Activated T-helper 1 cell treated with anti-CD3 and anti-CD28 coated beads, Interleukin-12 subunit alpha, Interleukin-12 subunit beta, Interleukin-2, Interleukin-4 antibody, amounts not matched to agents 30 ng/mL and 10 ng/mL and 1 ng/mL, durations not matched to agents 14 hours and 24 hours and 36 hours (primary cell): ENCODE measurements at regions of chr10 and their contacts with region 1.

Region 1: GRCh38 chr10:4131407-4132228 is 346.6 kb upstream of the KLF6 start:
- DNase-seq: peak; percentile 49
- H3K4me3 Mint-ChIP-seq: no peak overlapping the region
- H3K27ac Mint-ChIP-seq: no peak overlapping the region
- H3K4me1 Mint-ChIP-seq: peaks cover 26% of the 10 kb centered on the region
- H3K27me3 Mint-ChIP-seq: no peaks in the 10 kb centered on the region

Region 2: DNA sequence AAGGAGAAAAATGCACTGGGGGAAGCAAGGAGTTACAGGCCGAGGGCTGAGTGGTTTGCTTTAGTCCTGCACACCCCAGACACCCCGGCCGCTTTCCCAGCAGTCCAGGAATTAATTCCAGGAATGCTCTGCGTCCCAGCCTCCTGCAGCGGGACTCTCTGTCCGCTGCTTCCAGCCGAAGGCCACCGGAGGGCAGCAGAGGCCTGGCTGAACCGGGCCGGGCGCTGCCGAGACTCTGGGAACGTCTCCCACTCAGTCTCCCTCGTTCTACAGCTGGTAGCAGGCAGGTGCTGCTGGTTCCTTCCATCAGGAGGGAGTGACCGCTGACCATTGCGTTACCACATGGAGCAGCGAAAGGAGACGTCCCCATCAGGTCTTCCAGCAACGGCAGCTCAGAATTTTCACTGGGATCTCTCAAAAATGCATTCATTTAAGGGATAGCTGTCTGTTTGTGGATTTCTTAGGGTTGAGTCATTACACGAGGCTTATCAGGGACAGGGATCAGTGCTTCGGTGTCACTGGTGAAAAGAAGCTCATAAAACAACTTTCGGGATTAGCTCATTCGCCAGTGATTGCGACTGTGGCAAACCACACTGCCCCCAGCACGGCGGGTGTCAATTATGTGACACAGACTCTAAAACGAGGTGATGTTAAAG is 934.1 kb before region 1 on chr10:
- intact Hi-C with region 1: loop called (anchors 5 kb)
- DNase-seq: peak; percentile 76
- H3K4me3 Mint-ChIP-seq: peak overlapping the region; percentile 37
- H3K27ac Mint-ChIP-seq: peak overlapping the region; percentile 57
- H3K4me1 Mint-ChIP-seq: peaks cover 24% of the 10 kb centered on the region
- H3K27me3 Mint-ChIP-seq: peaks cover 82% of the 10 kb centered on the region

Region 3: DNA sequence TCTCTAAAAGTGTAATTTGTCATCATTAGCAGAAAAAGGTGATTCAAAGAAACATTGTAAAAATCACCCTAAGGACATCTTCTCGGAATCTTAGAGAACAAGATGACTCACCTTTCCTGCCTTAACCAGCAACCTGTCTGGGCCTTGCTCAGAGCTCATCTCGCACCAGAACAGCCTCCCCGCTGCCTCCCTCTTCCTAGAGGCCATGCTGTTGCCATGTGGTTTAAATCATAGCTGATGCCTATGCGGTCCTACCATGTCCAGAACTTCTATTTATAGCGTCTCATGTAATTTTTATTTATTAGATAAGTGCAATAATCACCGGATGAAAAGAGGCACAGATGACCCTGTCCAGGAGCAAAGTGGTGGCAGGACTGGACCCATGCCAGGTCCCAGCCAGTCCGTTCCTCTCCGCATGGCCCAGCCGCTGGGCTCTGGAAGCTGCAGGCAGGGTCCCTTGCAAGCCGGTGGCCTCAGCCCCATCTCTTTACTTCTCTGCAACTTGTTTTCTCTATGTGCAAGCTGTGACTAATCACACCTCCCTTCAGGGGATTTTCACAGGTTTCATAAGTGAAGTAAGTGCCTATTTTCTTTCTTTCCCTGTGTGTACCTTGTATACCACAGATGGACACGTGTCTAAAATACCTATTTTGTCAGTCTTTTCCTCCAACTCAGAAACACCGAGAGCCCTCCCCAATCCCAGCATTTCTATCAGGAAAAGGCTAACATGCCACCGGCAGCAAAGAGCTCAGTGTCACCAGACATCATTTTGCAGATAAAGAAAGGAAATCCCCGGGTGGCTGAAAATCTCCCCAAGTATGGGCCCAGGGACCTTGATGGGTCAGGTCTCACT is 373.8 kb before region 1 on chr10:
- intact Hi-C with region 1: loop called (anchors 1 kb)
- DNase-seq: peak; percentile 66
- H3K4me3 Mint-ChIP-seq: peak overlapping the region; percentile 78
- H3K27ac Mint-ChIP-seq: peak overlapping the region; percentile 100
- H3K4me1 Mint-ChIP-seq: peaks cover 84% of the 10 kb centered on the region
- H3K27me3 Mint-ChIP-seq: no peaks in the 10 kb centered on the region

Region 4: DNA sequence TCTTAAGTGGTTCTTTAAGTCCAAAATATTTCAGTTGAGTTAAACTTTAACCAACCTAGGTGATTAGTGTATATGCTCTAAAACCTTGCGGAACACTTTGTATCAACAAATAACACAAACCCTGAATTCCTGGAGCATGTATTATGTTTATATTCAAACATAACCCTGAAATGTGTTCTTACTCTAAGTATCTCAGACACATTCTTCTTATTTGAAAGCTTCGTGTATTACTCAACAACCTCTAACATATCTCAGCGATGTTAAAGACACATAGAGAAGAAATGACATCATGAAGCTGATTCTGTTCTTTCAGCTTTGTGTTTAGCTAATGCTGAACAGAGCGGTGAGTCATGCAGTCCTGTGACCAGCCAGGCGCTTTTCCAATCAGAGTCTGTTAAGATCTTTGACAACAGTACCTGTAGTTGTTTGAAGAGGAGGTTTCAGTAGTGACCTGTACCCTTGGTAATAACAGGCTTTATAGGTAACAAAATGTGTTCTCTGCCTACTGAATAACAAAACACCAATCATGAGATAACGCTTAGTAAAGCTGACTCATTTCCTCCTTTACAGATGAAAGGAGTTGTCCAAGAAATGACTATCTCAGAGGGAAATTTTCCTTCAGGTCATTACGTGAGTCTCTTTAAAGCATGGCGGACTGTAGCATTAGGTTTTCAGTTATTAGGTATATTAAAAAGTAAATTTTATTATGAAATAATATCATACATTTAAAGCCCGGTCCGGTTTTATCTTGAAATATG is 279.3 kb before region 1 on chr10:
- intact Hi-C with region 1: loop called (anchors 1 kb)
- DNase-seq: peak; percentile 58
- H3K4me3 Mint-ChIP-seq: peak overlapping the region; percentile 52
- H3K27ac Mint-ChIP-seq: peak overlapping the region; percentile 92
- H3K4me1 Mint-ChIP-seq: peaks cover 37% of the 10 kb centered on the region
- H3K27me3 Mint-ChIP-seq: no peaks in the 10 kb centered on the region

Region 5: DNA sequence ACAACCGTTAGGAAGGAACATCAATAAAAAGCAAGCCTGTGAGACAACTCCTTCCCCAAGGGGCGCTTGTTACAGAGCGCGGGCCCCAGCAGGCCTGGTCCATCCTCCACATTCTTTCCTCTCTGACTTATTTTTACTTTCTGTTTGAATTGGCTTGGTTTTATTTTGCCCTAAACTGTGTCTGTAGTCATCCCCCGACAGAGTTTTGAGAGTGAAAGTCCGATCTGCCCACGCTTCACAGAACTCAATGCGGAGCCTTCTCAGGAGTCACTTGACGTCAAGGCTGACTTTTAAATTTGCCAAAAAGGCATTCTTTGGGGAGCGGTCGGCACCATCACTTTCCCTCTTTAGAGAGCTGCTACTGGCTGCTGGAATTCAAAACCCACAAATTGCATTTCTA is 196.5 kb before region 1 on chr10:
- intact Hi-C with region 1: loop called (anchors 1 kb)
- DNase-seq: peak; percentile 75
- H3K4me3 Mint-ChIP-seq: peak overlapping the region; percentile 56
- H3K27ac Mint-ChIP-seq: peak overlapping the region; percentile 86
- H3K4me1 Mint-ChIP-seq: peaks cover 67% of the 10 kb centered on the region
- H3K27me3 Mint-ChIP-seq: peaks cover 3% of the 10 kb centered on the region

Region 6: GRCh38 chr10:4067531-4067930 is 64.1 kb before region 1 on chr10:
- intact Hi-C with region 1: loop called (anchors 2 kb)
- DNase-seq: no peak
- H3K4me3 Mint-ChIP-seq: no peak overlapping the region
- H3K27ac Mint-ChIP-seq: no peak overlapping the region
- H3K4me1 Mint-ChIP-seq: no peaks in the 10 kb centered on the region
- H3K27me3 Mint-ChIP-seq: no peaks in the 10 kb centered on the region

Region 7: GRCh38 chr10:4186849-4187540 is 55.4 kb after region 1 on chr10:
- intact Hi-C with region 1: no loop called
- DNase-seq: no peak
- H3K4me3 Mint-ChIP-seq: no peak overlapping the region
- H3K27ac Mint-ChIP-seq: no peak overlapping the region
- H3K4me1 Mint-ChIP-seq: peaks cover 25% of the 10 kb centered on the region
- H3K27me3 Mint-ChIP-seq: peaks cover 2% of the 10 kb centered on the region

Region 8: GRCh38 chr10:4249841-4250586 is 118.4 kb after region 1 on chr10:
- intact Hi-C with region 1: no loop called
- DNase-seq: no peak
- H3K4me3 Mint-ChIP-seq: no peak overlapping the region
- H3K27ac Mint-ChIP-seq: no peak overlapping the region
- H3K4me1 Mint-ChIP-seq: peaks cover 29% of the 10 kb centered on the region
- H3K27me3 Mint-ChIP-seq: no peaks in the 10 kb centered on the region

Region 9: DNA sequence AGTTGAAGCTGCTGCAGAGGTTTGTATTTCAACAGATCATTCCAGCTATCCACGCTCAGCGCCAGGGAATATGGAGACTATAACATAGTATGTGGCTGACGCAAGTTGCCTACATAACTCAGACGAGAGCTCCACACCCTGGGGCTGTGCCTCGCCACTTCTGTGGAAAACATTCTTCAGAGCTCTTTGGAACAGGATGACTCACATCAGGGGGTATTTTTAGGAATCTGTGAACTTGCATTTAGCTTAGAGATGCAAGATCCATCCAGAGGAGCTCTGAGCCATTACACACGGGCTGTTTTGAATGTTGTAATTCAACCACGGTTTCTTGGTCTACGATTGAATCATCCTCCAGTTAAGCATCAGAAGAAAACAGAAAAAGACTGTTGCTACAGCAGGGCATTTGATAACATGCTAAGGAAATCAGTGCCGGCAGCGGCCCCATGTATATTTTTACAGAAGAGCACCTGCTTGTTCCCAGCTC is 212.9 kb after region 1 on chr10:
- intact Hi-C with region 1: loop called (anchors 2 kb)
- DNase-seq: no peak
- H3K4me3 Mint-ChIP-seq: no peak overlapping the region
- H3K27ac Mint-ChIP-seq: peak overlapping the region; percentile 6
- H3K4me1 Mint-ChIP-seq: peaks cover 15% of the 10 kb centered on the region
- H3K27me3 Mint-ChIP-seq: peaks cover 4% of the 10 kb centered on the region

Region 10: DNA sequence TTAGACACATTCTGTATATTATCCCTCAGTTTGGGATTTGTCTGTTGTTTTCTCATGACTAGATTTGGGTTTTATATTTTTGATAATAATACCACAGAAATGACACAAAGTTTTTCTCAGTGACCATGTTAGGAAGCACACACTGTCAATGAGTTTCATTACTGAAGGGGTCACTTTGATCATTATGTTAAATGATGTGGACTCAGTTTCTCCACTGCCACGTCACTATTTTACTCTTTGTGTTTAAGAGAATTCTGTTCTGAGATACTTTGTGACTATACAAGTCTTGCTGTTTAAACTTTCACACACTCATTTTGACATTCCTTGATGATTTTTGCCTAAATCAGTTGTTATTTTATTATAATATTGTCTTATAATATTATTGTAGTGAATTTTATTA is 293.5 kb after region 1 on chr10:
- intact Hi-C with region 1: no loop called
- DNase-seq: no peak
- H3K4me3 Mint-ChIP-seq: no peak overlapping the region
- H3K27ac Mint-ChIP-seq: no peak overlapping the region
- H3K4me1 Mint-ChIP-seq: no peaks in the 10 kb centered on the region
- H3K27me3 Mint-ChIP-seq: peaks cover 28% of the 10 kb centered on the region